IMR-90 (cell line): ENCODE measurements at regions of chr16 and their contacts with region 1.

Region 1: GRCh38 chr16:23634461-23635036 is 6.6 kb downstream of the PALB2 start:
- DNase-seq: no peak
- ATAC-seq: no peak
- H3K4me3 ChIP-seq: no peak overlapping the region
- H3K27ac ChIP-seq: no peak overlapping the region
- H3K4me1 ChIP-seq: no peaks in the 10 kb centered on the region
- H3K27me3 ChIP-seq: no peaks in the 10 kb centered on the region
- CTCF ChIP-seq: no peak
- POLR2A ChIP-seq: no peak
- RAD21 ChIP-seq: no peak

Region 2: GRCh38 chr16:23469814-23470213 is 164.7 kb before region 1 on chr16:
- CTCF ChIA-PET with region 1: no interaction called
- POLR2A ChIA-PET with region 1: no interaction called
- dilution Hi-C with region 1: no loop called
- in situ Hi-C with region 1: no loop called
- intact Hi-C with region 1: loop called (anchors 5 kb)
- DNase-seq: peak; percentile 54
- ATAC-seq: no peak
- H3K4me3 ChIP-seq: no peak overlapping the region
- H3K27ac ChIP-seq: no peak overlapping the region
- H3K4me1 ChIP-seq: peaks cover 7% of the 10 kb centered on the region
- H3K27me3 ChIP-seq: no peaks in the 10 kb centered on the region
- CTCF ChIP-seq: no peak
- POLR2A ChIP-seq: no peak
- RAD21 ChIP-seq: no peak

Region 3: GRCh38 chr16:23781177-23781576 is 146.6 kb after region 1 on chr16:
- CTCF ChIA-PET with region 1: no interaction called
- POLR2A ChIA-PET with region 1: no interaction called
- dilution Hi-C with region 1: no loop called
- in situ Hi-C with region 1: no loop called
- intact Hi-C with region 1: no loop called
- DNase-seq: no peak
- ATAC-seq: no peak
- H3K4me3 ChIP-seq: no peak overlapping the region
- H3K27ac ChIP-seq: no peak overlapping the region
- H3K4me1 ChIP-seq: no peaks in the 10 kb centered on the region
- H3K27me3 ChIP-seq: no peaks in the 10 kb centered on the region
- CTCF ChIP-seq: no peak
- POLR2A ChIP-seq: no peak
- RAD21 ChIP-seq: no peak